ENCODE measurements at regions of chr11 and their contacts with region 1.

Region 1: GRCh38 chr11:102946237-102946636 is 9.3 kb downstream of the MMP13 start:
- DNase-seq: no peak
- H3K4me3 ChIP-seq: no peak overlapping the region
- H3K4me3 Mint-ChIP-seq: no peak overlapping the region
- H3K27ac ChIP-seq: no peak overlapping the region
- H3K27ac Mint-ChIP-seq: no peak overlapping the region
- H3K4me1 ChIP-seq: no peaks in the 10 kb centered on the region
- H3K4me1 Mint-ChIP-seq: peaks cover 0 to 1% (median 0%) of the 10 kb centered on the region in 4 donors
- H3K27me3 ChIP-seq: peaks cover 3% of the 10 kb centered on the region
- H3K27me3 Mint-ChIP-seq: peaks cover 7% of the 10 kb centered on the region in 2 donors

Region 2: GRCh38 chr11:102935514-102935913 is 10.7 kb before region 1 on chr11:
- CTCF ChIA-PET with region 1: interaction called, 16 read pairs
- POLR2A ChIA-PET with region 1: no interaction called
- intact Hi-C with region 1: no loop called
- DNase-seq: no peak
- H3K4me3 ChIP-seq: no peak overlapping the region
- H3K4me3 Mint-ChIP-seq: no peak overlapping the region
- H3K27ac ChIP-seq: no peak overlapping the region
- H3K27ac Mint-ChIP-seq: no peak overlapping the region
- H3K4me1 ChIP-seq: no peaks in the 10 kb centered on the region
- H3K4me1 Mint-ChIP-seq: no peaks in the 10 kb centered on the region
- H3K27me3 ChIP-seq: no peaks in the 10 kb centered on the region
- H3K27me3 Mint-ChIP-seq: peaks cover 3 to 10% of the 10 kb centered on the region in 2 donors

Region 3: GRCh38 chr11:103043826-103044624 is 97.8 kb after region 1 on chr11:
- CTCF ChIA-PET with region 1: no interaction called
- POLR2A ChIA-PET with region 1: no interaction called
- intact Hi-C with region 1: no loop called
- DNase-seq: no peak
- H3K4me3 ChIP-seq: no peak overlapping the region
- H3K4me3 Mint-ChIP-seq: no peak overlapping the region
- H3K27ac ChIP-seq: no peak overlapping the region
- H3K27ac Mint-ChIP-seq: no peak overlapping the region
- H3K4me1 ChIP-seq: no peaks in the 10 kb centered on the region
- H3K4me1 Mint-ChIP-seq: no peaks in the 10 kb centered on the region
- H3K27me3 ChIP-seq: peaks cover 3% of the 10 kb centered on the region
- H3K27me3 Mint-ChIP-seq: peaks cover 0 to 2% of the 10 kb centered on the region in 2 donors

Measured in CD4-positive, alpha-beta memory T cell (primary cell).